Caco-2 (cell line): ENCODE measurements at regions of chr4 and their contacts with region 1.

Region 1: GRCh38 chr4:87093443-87094123 is 126.8 kb downstream of the KLHL8 start:
- DNase-seq: peak; percentile 40 to 55
- H3K4me3 ChIP-seq: no peak overlapping the region
- H3K4me3 Mint-ChIP-seq: no peak overlapping the region
- H3K27ac Mint-ChIP-seq: peak overlapping the region; percentile 67
- H3K4me1 ChIP-seq: peaks cover 19% of the 10 kb centered on the region
- H3K4me1 Mint-ChIP-seq: peaks cover 31% of the 10 kb centered on the region
- H3K27me3 ChIP-seq: no peaks in the 10 kb centered on the region
- H3K27me3 Mint-ChIP-seq: no peaks in the 10 kb centered on the region
- CTCF ChIP-seq: peak; percentile 31 to 56

Region 2: GRCh38 chr4:86497980-86498862 is 595.4 kb before region 1 on chr4:
- CTCF ChIA-PET with region 1: no interaction called
- POLR2A ChIA-PET with region 1: no interaction called
- intact Hi-C with region 1: loop called (anchors 5 kb)
- DNase-seq: peak in 1 of 2 experiments; percentile 35
- H3K4me3 ChIP-seq: no peak overlapping the region
- H3K4me3 Mint-ChIP-seq: no peak overlapping the region
- H3K27ac Mint-ChIP-seq: no peak overlapping the region
- H3K4me1 ChIP-seq: peaks cover 5% of the 10 kb centered on the region; the same call in 1 of the 2 replicates
- H3K4me1 Mint-ChIP-seq: peaks cover 7% of the 10 kb centered on the region
- H3K27me3 ChIP-seq: no peaks in the 10 kb centered on the region
- H3K27me3 Mint-ChIP-seq: no peaks in the 10 kb centered on the region
- CTCF ChIP-seq: peak; percentile 71 to 75

Region 3: DNA sequence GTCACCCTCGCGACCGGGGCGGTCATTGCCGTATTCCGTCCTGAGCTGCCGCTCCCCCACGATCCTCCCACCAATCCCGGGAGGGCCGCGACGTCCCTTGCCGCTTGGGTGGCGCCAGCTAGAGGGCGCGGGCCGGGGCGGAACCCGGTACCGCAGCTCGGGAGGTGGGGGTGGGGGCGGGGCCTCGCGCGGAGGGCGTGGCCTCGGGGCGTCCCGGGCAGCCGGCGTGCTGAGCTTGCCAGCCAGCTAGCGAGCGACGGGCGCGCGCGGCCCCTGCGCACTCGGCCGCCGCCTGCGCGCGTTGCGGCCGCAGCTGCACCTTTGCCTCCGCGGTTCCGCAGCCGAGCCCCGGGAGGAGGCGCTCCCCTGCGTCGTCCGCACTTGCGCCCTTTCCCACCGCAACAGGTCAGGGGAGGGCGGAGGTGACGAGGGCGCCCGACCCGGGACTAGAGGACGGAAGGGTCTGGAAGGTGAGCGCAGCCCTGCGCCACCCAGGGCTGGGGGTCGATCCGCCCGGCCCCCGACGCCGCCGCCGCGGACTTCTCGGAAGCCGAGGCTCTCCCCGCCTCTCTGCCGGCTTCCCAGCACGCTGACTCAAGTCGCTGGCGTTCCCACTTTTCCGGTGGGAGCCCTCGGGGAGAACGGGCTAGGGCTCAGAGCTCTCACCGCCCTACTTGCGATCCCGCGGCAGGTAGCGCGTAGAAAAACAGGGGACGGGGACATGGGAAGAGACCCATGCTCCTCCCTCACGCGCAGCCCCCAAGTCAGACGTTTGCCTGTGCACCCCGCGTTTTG is 158.6 kb before region 1 on chr4 and contains the start of gene AFF1:
- CTCF ChIA-PET with region 1: interaction called, 16 read pairs
- POLR2A ChIA-PET with region 1: interaction called, 4 read pairs
- intact Hi-C with region 1: loop called (anchors 1 kb)
- DNase-seq: peak; percentile 93 to 95
- H3K4me3 ChIP-seq: peak within 1 kb of the TSS; percentile 84
- H3K4me3 Mint-ChIP-seq: peak within 1 kb of the TSS; percentile 91
- H3K27ac Mint-ChIP-seq: peak within 1 kb of the TSS; percentile 89
- H3K4me1 ChIP-seq: peaks cover 22% of the 10 kb centered on the region
- H3K4me1 Mint-ChIP-seq: peaks cover 20% of the 10 kb centered on the region
- H3K27me3 ChIP-seq: no peaks in the 10 kb centered on the region
- H3K27me3 Mint-ChIP-seq: no peaks in the 10 kb centered on the region
- CTCF ChIP-seq: peak in 1 of 2 experiments; percentile 44
- total RNA-seq, gene AFF1: 45.2 and 48.3 TPM in 2 replicates

Region 4: GRCh38 chr4:87026800-87027495 is 66.6 kb before region 1 on chr4:
- CTCF ChIA-PET with region 1: no interaction called
- POLR2A ChIA-PET with region 1: no interaction called
- intact Hi-C with region 1: loop called (anchors 1 kb)
- DNase-seq: no peak
- H3K4me3 ChIP-seq: no peak overlapping the region
- H3K4me3 Mint-ChIP-seq: no peak overlapping the region
- H3K27ac Mint-ChIP-seq: peak overlapping the region; percentile 50
- H3K4me1 ChIP-seq: peaks cover 61% of the 10 kb centered on the region
- H3K4me1 Mint-ChIP-seq: peaks cover 25% of the 10 kb centered on the region
- H3K27me3 ChIP-seq: no peaks in the 10 kb centered on the region
- H3K27me3 Mint-ChIP-seq: no peaks in the 10 kb centered on the region
- CTCF ChIP-seq: no peak

Region 5: GRCh38 chr4:87073199-87074120 is 20.1 kb before region 1 on chr4:
- CTCF ChIA-PET with region 1: no interaction called
- POLR2A ChIA-PET with region 1: no interaction called
- intact Hi-C with region 1: no loop called
- DNase-seq: no peak
- H3K4me3 ChIP-seq: no peak overlapping the region
- H3K4me3 Mint-ChIP-seq: no peak overlapping the region
- H3K27ac Mint-ChIP-seq: peak overlapping the region; percentile 2
- H3K4me1 ChIP-seq: no peaks in the 10 kb centered on the region
- H3K4me1 Mint-ChIP-seq: peaks cover 7% of the 10 kb centered on the region
- H3K27me3 ChIP-seq: no peaks in the 10 kb centered on the region
- H3K27me3 Mint-ChIP-seq: no peaks in the 10 kb centered on the region
- CTCF ChIP-seq: no peak

Region 6: GRCh38 chr4:87120411-87121199 is 27.0 kb after region 1 on chr4:
- CTCF ChIA-PET with region 1: interaction called, 7 read pairs
- POLR2A ChIA-PET with region 1: no interaction called
- intact Hi-C with region 1: loop called (anchors 1 kb)
- DNase-seq: peak; percentile 51 to 63
- H3K4me3 ChIP-seq: no peak overlapping the region
- H3K4me3 Mint-ChIP-seq: peak overlapping the region; percentile 44
- H3K27ac Mint-ChIP-seq: peak overlapping the region; percentile 71
- H3K4me1 ChIP-seq: peaks cover 53% of the 10 kb centered on the region
- H3K4me1 Mint-ChIP-seq: peaks cover 27% of the 10 kb centered on the region
- H3K27me3 ChIP-seq: no peaks in the 10 kb centered on the region
- H3K27me3 Mint-ChIP-seq: no peaks in the 10 kb centered on the region
- CTCF ChIP-seq: no peak

Region 7: DNA sequence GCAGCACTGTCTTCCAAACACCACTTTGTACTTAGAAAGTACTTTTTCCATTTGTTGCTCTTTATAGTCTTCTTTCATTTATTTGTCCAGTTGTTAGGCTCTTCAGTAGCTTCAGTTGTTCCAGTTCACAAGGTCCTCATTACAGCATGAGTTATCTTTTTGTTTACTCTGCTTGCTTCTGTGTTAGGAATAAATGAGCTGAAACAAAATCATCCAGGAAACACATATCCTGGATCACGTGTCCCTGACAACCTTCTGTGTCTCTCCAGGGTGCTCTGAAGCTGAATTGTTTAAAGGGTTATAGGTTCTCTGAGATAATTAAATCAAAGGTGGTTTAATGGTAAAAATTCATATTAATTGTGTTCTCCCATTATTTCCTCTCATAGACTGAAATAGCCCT is 146.8 kb after region 1 on chr4:
- CTCF ChIA-PET with region 1: no interaction called
- POLR2A ChIA-PET with region 1: no interaction called
- intact Hi-C with region 1: no loop called
- DNase-seq: no peak
- H3K4me3 ChIP-seq: no peak overlapping the region
- H3K4me3 Mint-ChIP-seq: no peak overlapping the region
- H3K27ac Mint-ChIP-seq: no peak overlapping the region
- H3K4me1 ChIP-seq: 0 out of 2 replicates have a peak, but pooled peaks cover 7% of the 10 kb centered on the region
- H3K4me1 Mint-ChIP-seq: peaks cover 8% of the 10 kb centered on the region
- H3K27me3 ChIP-seq: no peaks in the 10 kb centered on the region
- H3K27me3 Mint-ChIP-seq: no peaks in the 10 kb centered on the region
- CTCF ChIP-seq: no peak